Aorta (tissue), 5 donors: ENCODE measurements at regions of chr9 and their contacts with region 1.

Region 1: DNA sequence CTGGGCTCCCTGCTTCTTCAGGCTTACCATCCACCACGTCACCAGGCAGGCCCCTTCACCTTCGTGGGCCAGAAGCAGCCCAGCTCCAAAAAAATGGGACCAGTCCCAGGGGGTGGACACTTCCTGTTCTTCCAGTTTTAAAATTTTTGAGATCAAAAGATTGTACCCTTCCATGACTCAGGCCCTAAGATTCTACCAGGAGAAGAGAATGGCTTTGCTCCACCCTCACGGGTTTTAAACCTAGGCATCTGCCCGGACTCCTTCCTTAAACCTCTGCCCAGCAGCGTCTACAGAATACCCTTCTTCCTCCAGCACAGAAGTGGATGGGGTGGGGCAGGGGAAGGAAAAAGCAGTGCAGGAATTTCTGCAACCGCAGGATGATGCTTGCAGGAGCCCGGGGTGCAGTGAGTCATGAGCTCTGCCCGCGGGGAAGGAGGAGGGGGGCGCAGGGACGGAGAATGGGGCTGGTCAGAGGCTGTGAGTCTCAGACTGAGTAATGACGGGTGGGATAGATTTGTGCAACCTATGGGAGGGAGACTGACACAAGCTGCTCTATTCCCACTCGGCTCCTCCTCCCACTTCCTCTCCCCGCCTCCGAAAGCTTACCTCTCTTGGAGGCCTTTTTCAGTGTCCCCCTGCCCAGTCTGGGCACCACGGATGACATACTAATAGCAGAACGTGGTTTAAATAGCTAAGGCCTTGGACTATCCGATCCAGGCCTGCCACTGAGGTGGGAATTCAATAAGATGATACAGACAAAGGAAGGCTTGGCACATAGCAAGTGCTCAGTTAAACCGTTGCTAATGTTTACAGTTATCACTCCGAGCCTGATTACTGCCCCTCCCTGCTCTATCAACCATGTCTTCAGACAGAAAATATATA is 50.2 kb upstream of the STXBP1 start:
- DNase-seq: peak; percentile 94 to 95
- ATAC-seq: peak; percentile 86
- H3K4me3 ChIP-seq: no peak overlapping the region
- H3K27ac ChIP-seq: peak overlapping the region; percentile 8 to 73
- H3K4me1 ChIP-seq: peaks cover 0 to 3% of the 10 kb centered on the region in 2 donors
- H3K27me3 ChIP-seq: no peaks in the 10 kb centered on the region

Region 2: GRCh38 chr9:127495906-127496421 is 65.9 kb before region 1 on chr9:
- intact Hi-C with region 1: no loop called
- DNase-seq: no peak
- ATAC-seq: no peak
- H3K4me3 ChIP-seq: no peak overlapping the region
- H3K27ac ChIP-seq: peak overlapping the region; percentile 35 to 71
- H3K4me1 ChIP-seq: no peaks in the 10 kb centered on the region
- H3K27me3 ChIP-seq: no peaks in the 10 kb centered on the region

Region 3: DNA sequence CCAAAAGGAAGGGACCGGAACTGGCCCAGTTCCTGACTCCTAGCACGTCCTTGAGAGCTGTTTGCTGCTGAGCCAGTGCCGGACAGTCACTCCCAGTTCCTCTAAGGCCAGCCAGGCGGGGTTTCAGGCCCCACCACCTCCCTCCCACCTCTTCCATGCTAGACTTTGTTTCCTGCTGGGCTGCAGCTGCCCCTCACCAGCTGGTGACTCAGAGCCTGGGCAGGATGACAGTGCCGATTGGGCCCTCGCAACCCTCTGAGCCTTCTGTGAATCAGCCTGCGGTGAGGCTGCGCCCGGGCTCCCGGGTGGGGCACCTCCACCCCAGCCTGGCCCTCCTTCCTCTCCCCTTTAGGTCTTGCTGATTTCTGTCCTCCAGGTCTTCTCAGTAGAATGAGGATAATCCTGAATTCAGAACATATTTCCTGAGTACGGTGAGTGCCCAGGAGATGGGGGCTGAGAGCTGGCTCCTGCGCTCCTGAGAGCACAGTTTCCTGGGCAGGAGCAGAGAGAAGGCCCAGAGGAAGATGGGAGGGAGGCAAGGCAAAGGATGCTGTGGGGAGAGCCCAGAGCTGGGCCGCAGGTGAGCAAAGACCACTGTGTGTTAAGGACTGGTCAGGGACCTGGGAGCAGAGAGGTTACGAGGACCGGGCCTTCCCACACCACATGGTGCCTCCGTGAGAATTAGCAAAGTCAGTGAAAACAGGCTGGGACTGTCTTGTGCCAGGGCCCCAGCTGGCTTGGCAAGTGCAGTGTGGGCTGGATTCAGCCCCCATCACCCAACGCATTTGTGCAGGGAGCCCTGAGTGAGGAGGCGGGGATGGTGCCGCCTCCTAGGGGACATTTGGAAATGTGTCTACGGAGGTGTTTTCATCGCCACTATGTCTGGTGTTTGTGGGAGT is 17.3 kb after region 1 on chr9:
- intact Hi-C with region 1: loop called in 1 of 2 experiments (anchors 2 kb)
- DNase-seq: peak; percentile 97 to 98
- ATAC-seq: peak; percentile 92
- H3K4me3 ChIP-seq: no peak overlapping the region
- H3K27ac ChIP-seq: peak overlapping the region; percentile 59 to 96
- H3K4me1 ChIP-seq: no peaks in the 10 kb centered on the region
- H3K27me3 ChIP-seq: no peaks in the 10 kb centered on the region